Naive thymus-derived CD4-positive, alpha-beta T cell (primary cell): ENCODE measurements at regions of chr6 and their contacts with region 1.

Region 1: GRCh38 chr6:149043476-149044130 is 273.9 kb upstream of the TAB2 start:
- DNase-seq: no peak
- ATAC-seq: no peak
- H3K4me3 ChIP-seq: no peak overlapping the region
- H3K4me3 Mint-ChIP-seq: no peak overlapping the region
- H3K27ac ChIP-seq: no peak overlapping the region
- H3K27ac Mint-ChIP-seq: no peak overlapping the region
- H3K4me1 ChIP-seq: peaks cover 8 to 18% of the 10 kb centered on the region in 2 donors
- H3K4me1 Mint-ChIP-seq: peaks cover 13 to 81% (median 27%) of the 10 kb centered on the region in 7 donors
- H3K27me3 ChIP-seq: no peaks in the 10 kb centered on the region
- H3K27me3 Mint-ChIP-seq: no peaks in the 10 kb centered on the region

Region 2: GRCh38 chr6:149060300-149060997 is 16.8 kb after region 1 on chr6:
- CTCF ChIA-PET with region 1: interaction called, 3 read pairs
- POLR2A ChIA-PET with region 1: interaction called, 11 read pairs
- intact Hi-C with region 1: loop called in 1 of 2 experiments (anchors 1 kb)
- DNase-seq: peak in 7 of 9 donors; percentile 21 to 54 (median 25)
- ATAC-seq: peak; percentile 89
- H3K4me3 ChIP-seq: peak overlapping the region; percentile 25
- H3K4me3 Mint-ChIP-seq: peak overlapping the region; percentile 47 to 83 (median 78)
- H3K27ac ChIP-seq: no peak overlapping the region
- H3K27ac Mint-ChIP-seq: peak overlapping the region; percentile 23 to 95 (median 68)
- H3K4me1 ChIP-seq: peaks cover 9 to 16% of the 10 kb centered on the region in 2 donors
- H3K4me1 Mint-ChIP-seq: peaks cover 17 to 71% (median 34%) of the 10 kb centered on the region in 7 donors
- H3K27me3 ChIP-seq: no peaks in the 10 kb centered on the region
- H3K27me3 Mint-ChIP-seq: no peaks in the 10 kb centered on the region

Region 3: GRCh38 chr6:149065658-149066556 is 22.3 kb after region 1 on chr6:
- CTCF ChIA-PET with region 1: interaction called, 3 read pairs
- POLR2A ChIA-PET with region 1: interaction called, 11 read pairs
- intact Hi-C with region 1: loop called (anchors 1 kb)
- DNase-seq: peak in 7 of 9 donors; percentile 76 to 92 (median 88)
- ATAC-seq: peak; percentile 97
- H3K4me3 ChIP-seq: peak overlapping the region; percentile 26
- H3K4me3 Mint-ChIP-seq: peak overlapping the region; percentile 22 to 85 (median 70)
- H3K27ac ChIP-seq: peak overlapping the region; percentile 73
- H3K27ac Mint-ChIP-seq: peak overlapping the region; percentile 85 to 98 (median 94)
- H3K4me1 ChIP-seq: peaks cover 19 to 23% of the 10 kb centered on the region in 2 donors
- H3K4me1 Mint-ChIP-seq: peaks cover 24 to 63% (median 41%) of the 10 kb centered on the region in 7 donors
- H3K27me3 ChIP-seq: no peaks in the 10 kb centered on the region
- H3K27me3 Mint-ChIP-seq: no peaks in the 10 kb centered on the region

Region 4: GRCh38 chr6:149112976-149113375 is 69.4 kb after region 1 on chr6:
- CTCF ChIA-PET with region 1: no interaction called
- POLR2A ChIA-PET with region 1: no interaction called
- intact Hi-C with region 1: no loop called
- DNase-seq: no peak
- ATAC-seq: no peak
- H3K4me3 ChIP-seq: no peak overlapping the region
- H3K4me3 Mint-ChIP-seq: peak overlapping the region in 1 of 10 donors; percentile 18
- H3K27ac ChIP-seq: no peak overlapping the region
- H3K27ac Mint-ChIP-seq: peak overlapping the region in 2 of 9 donors; percentile 67 to 71
- H3K4me1 ChIP-seq: peaks cover 0 to 5% of the 10 kb centered on the region in 2 donors
- H3K4me1 Mint-ChIP-seq: peaks cover 13 to 87% (median 32%) of the 10 kb centered on the region in 7 donors
- H3K27me3 ChIP-seq: no peaks in the 10 kb centered on the region
- H3K27me3 Mint-ChIP-seq: no peaks in the 10 kb centered on the region